Activated CD4-positive, alpha-beta T cell treated with anti-CD3 and anti-CD28 coated beads for 36 hours (primary cell): ENCODE measurements at regions of chr22 and their contacts with region 1.

Region 1: GRCh38 chr22:19854778-19855503 is at the starts of genes GNB1L and RTL10:
- DNase-seq: peak; percentile 98
- ATAC-seq: peak; percentile 93
- H3K4me3 Mint-ChIP-seq: peak within 1 kb of the TSS; percentile 89
- H3K27ac Mint-ChIP-seq: peak within 1 kb of the TSS; percentile 97
- H3K4me1 Mint-ChIP-seq: peaks cover 51% of the 10 kb centered on the region
- H3K27me3 Mint-ChIP-seq: no peaks in the 10 kb centered on the region
- total RNA-seq, gene GNB1L: 7.6 to 12.4 TPM
- total RNA-seq, gene RTL10: 14.9 to 15.6 TPM

Region 2: DNA sequence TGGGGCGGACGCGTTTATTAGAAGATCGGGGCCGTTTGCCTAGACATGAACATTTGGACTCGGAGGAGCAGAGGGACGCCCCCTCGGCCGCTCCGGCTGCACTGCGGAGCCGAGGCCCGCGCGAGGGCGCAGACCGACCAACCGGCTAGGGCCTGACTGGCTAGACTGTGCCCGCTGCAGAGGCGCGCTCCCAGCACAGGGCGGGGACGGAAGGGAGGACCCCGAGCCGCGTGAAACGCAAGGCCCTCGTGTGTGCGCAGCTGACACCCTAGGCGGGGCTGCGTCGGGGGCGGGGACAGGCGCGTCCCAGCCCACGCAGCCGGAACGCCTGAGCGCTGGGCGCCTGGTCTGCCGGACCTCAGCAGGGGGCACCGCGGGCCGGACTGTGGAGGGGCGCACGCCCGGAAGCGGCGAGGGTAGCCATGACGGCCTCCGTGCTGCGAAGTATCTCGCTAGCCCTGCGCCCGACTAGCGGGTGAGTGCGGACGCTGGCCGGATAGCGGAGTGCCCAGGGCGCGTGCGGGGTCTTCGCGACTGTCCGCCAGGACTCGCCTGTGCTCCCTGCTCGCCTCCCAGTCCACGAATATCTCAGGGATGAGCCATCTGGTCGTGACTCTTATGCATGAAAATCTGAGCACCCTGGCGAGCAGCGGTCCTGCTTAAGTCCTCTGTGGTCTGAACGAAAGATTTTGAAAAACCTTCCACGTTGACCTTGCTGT is 422.6 kb before region 1 on chr22 and contains the start of gene MRPL40:
- CTCF ChIA-PET with region 1: no interaction called
- POLR2A ChIA-PET with region 1: no interaction called
- intact Hi-C with region 1: loop called in 1 of 2 experiments (anchors 1 kb)
- DNase-seq: peak; percentile 94
- ATAC-seq: peak; percentile 86
- H3K4me3 Mint-ChIP-seq: peak within 1 kb of the TSS; percentile 75
- H3K27ac Mint-ChIP-seq: peak within 1 kb of the TSS; percentile 96
- H3K4me1 Mint-ChIP-seq: peaks cover 43% of the 10 kb centered on the region
- H3K27me3 Mint-ChIP-seq: no peaks in the 10 kb centered on the region
- total RNA-seq, gene MRPL40: 34.1 to 34.4 TPM

Region 3: GRCh38 chr22:19730655-19731360 is 124.1 kb before region 1 on chr22:
- CTCF ChIA-PET with region 1: interaction called, 10 read pairs
- POLR2A ChIA-PET with region 1: no interaction called
- intact Hi-C with region 1: loop called in 1 of 2 experiments (anchors 2 kb)
- DNase-seq: peak; percentile 92
- ATAC-seq: peak; percentile 93
- H3K4me3 Mint-ChIP-seq: peak overlapping the region; percentile 56
- H3K27ac Mint-ChIP-seq: no peak overlapping the region
- H3K4me1 Mint-ChIP-seq: no peaks in the 10 kb centered on the region
- H3K27me3 Mint-ChIP-seq: no peaks in the 10 kb centered on the region

Region 4: DNA sequence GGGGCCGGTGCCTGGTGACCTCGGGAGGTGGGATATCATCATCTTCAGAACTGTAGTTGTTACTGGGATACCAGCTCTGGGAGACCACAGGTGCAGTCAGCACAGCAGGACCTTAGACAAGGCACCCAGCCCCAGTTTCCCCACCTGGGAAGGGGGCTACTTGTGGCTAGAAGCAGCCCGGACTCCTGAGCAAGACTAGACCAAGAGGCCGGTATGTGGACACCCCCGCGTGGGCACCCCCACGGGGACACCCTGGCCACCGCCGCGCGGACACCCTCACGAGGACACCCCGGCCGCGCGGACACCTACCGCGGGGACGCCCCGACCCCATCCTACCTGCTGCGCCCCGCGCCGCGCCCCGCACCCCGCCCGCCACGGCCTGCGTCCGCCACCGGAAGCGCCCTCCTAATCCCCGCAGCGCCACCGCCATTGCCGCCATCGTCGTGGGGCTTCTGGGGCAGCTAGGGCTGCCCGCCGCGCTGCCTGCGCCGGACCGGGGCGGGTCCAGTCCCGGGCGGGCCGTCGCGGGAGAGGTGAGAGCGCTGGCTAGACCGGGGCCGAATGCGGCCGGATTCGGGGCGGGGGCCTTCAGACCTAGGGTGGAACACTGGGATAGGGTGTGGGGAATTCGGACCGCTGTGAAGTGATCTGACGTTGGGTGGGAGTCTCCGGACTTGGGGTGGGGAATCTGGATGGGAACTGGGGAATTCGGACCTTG is 86.6 kb after region 1 on chr22 and contains the starts of genes COMT and TXNRD2:
- CTCF ChIA-PET with region 1: interaction called, 3 read pairs
- POLR2A ChIA-PET with region 1: no interaction called
- intact Hi-C with region 1: loop called in 1 of 2 experiments (anchors 2 kb)
- DNase-seq: peak; percentile 83
- ATAC-seq: peak; percentile 85
- H3K4me3 Mint-ChIP-seq: peak within 1 kb of the TSS; percentile 98
- H3K27ac Mint-ChIP-seq: peak within 1 kb of the TSS; percentile 98
- H3K4me1 Mint-ChIP-seq: peaks cover 27% of the 10 kb centered on the region
- H3K27me3 Mint-ChIP-seq: no peaks in the 10 kb centered on the region
- total RNA-seq, gene COMT: 63.5 to 78.5 TPM
- total RNA-seq, gene TXNRD2: 24.1 to 25.3 TPM

Region 5: DNA sequence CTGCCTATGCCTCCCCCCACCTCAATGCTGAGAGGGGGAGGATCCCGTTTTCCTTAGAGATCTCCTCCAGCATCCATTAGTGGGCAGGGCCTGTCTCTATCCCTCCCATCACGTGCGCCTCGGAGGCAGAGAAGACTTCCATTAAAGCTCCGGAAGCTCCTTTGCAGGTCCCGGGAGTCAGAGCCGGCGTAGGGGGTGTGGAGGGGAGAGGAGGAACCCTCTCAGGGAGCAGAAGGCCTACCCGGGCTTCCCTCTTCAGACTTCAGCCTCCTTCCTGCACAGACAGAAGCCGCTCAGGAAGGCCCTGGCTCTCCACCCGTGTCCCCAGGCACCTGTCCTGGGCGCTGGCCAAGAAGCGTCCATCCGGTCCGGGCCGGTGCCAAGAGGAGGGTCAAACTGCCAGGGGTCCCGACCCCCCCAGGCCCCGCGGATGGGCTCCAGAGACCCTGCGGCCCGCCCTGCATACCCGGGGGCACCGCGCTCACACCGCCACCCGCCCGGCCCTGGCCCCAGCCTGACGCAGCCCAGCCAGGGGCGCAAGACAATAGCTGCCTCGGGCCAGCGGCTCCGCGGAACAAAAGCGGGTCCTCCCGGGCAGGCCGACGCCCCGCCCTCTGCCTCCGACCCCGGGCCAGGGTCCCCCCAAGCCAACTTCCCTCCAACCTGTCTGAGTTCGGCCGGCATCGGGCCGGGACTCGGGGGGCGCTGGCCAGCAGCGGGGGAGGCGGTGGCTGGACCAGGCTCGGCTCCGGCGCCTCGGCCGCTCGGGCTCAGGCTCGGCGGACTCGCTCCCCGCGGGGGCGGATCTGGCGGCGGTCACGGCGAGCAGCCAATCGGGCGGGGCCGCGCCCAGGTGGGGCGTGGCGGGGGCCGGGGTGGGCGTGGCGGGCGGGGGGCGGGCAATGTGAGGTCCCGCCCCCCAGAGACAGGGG is 131.7 kb after region 1 on chr22:
- CTCF ChIA-PET with region 1: no interaction called
- POLR2A ChIA-PET with region 1: no interaction called
- intact Hi-C with region 1: no loop called
- DNase-seq: peak; percentile 84
- ATAC-seq: peak; percentile 88
- H3K4me3 Mint-ChIP-seq: no peak overlapping the region
- H3K27ac Mint-ChIP-seq: no peak overlapping the region
- H3K4me1 Mint-ChIP-seq: no peaks in the 10 kb centered on the region
- H3K27me3 Mint-ChIP-seq: no peaks in the 10 kb centered on the region

Region 6: GRCh38 chr22:20130739-20131596 is 276.0 kb after region 1 on chr22:
- CTCF ChIA-PET with region 1: no interaction called
- POLR2A ChIA-PET with region 1: no interaction called
- intact Hi-C with region 1: loop called in 1 of 2 experiments (anchors 1 kb)
- DNase-seq: peak; percentile 81
- ATAC-seq: peak; percentile 52
- H3K4me3 Mint-ChIP-seq: peak overlapping the region; percentile 51
- H3K27ac Mint-ChIP-seq: no peak overlapping the region
- H3K4me1 Mint-ChIP-seq: peaks cover 33% of the 10 kb centered on the region
- H3K27me3 Mint-ChIP-seq: no peaks in the 10 kb centered on the region